GM10248 (cell line): ENCODE measurements at regions of chr1 and their contacts with region 1.

Region 1: DNA sequence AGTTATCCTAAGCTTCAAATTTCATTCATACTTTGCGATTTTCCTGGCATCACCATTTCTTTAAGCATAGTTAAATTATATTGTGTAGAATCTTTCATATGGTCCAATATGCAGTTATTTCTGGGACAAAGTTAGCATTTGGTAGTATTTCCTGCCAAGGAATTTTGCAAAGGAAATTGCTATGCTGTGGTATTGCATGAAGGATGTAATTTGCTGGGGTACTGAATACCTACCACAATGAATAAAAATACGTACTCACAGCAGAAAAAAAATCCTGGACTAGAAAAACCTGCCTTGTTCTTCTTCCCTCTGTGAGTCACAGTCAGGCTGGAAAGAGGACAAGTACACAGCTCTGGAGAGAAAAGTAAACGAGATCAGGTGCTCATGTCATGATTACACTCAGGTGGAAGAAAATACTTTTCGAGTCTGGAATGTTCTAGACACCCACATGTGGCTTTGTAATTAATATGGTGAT is 241.2 kb downstream of the PTBP2 start:
- DNase-seq: no peak
- CTCF ChIP-seq: no peak

Region 2: GRCh38 chr1:96945509-96946084 is 17.2 kb before region 1 on chr1:
- CTCF ChIA-PET with region 1: interaction called, 14 read pairs
- POLR2A ChIA-PET with region 1: no interaction called
- DNase-seq: no peak
- CTCF ChIP-seq: no peak

Region 3: GRCh38 chr1:97017895-97018294 is 55.1 kb after region 1 on chr1:
- CTCF ChIA-PET with region 1: no interaction called
- POLR2A ChIA-PET with region 1: no interaction called
- DNase-seq: no peak
- CTCF ChIP-seq: no peak

Region 4: GRCh38 chr1:98053471-98054366 is 1090.9 kb after region 1 on chr1:
- CTCF ChIA-PET with region 1: interaction called, 10 read pairs
- POLR2A ChIA-PET with region 1: no interaction called
- DNase-seq: peak; percentile 77
- CTCF ChIP-seq: peak; percentile 89